ENCODE measurements at regions of chr2 and their contacts with region 1.

Region 1: GRCh38 chr2:121095257-121096080 is 189.5 kb downstream of the TFCP2L1 start:
- DNase-seq: peak; percentile 67 to 78 (median 73)
- ATAC-seq: peak; percentile 88 to 92 (median 91)
- H3K4me3 ChIP-seq: no peak overlapping the region
- H3K27ac ChIP-seq: no peak overlapping the region
- H3K4me1 ChIP-seq: no peaks in the 10 kb centered on the region
- H3K27me3 ChIP-seq: no peaks in the 10 kb centered on the region
- CTCF ChIP-seq: peak; percentile 65 to 73 (median 68)
- POLR2A ChIP-seq: no peak

Region 2: DNA sequence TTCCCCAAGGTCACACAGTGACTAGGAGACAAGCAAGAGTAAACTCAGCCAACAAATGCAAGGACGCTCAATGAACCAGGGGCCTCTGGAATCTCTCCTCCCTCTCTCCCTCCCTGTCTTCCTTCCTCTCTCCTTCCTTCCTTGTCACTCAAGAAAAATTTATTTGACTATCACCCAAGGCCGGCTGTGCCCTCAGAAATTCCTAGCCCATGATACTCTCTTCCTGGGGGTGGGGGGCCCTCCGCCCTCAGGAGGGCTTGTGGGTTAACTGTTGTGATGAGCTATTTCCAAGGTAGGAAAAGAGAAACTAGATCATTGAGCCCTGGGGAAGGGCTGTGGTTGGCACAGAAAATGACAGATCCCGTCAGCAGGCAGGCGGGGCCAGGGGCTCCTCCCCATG is 727.8 kb before region 1 on chr2:
- intact Hi-C with region 1: no loop called
- DNase-seq: no peak
- ATAC-seq: no peak
- H3K4me3 ChIP-seq: no peak overlapping the region
- H3K27ac ChIP-seq: no peak overlapping the region
- H3K4me1 ChIP-seq: no peaks in the 10 kb centered on the region
- H3K27me3 ChIP-seq: no peaks in the 10 kb centered on the region
- CTCF ChIP-seq: no peak
- POLR2A ChIP-seq: no peak

Region 3: GRCh38 chr2:121333834-121334558 is 238.5 kb after region 1 on chr2:
- intact Hi-C with region 1: loop called (anchors 10 kb)
- DNase-seq: no peak
- ATAC-seq: no peak
- H3K4me3 ChIP-seq: no peak overlapping the region
- H3K27ac ChIP-seq: no peak overlapping the region
- H3K4me1 ChIP-seq: peaks cover 0 to 14% (median 0%) of the 10 kb centered on the region in 4 donors
- H3K27me3 ChIP-seq: no peaks in the 10 kb centered on the region
- CTCF ChIP-seq: no peak
- POLR2A ChIP-seq: no peak